ENCODE measurements at regions of chr19 and their contacts with region 1.

Region 1: DNA sequence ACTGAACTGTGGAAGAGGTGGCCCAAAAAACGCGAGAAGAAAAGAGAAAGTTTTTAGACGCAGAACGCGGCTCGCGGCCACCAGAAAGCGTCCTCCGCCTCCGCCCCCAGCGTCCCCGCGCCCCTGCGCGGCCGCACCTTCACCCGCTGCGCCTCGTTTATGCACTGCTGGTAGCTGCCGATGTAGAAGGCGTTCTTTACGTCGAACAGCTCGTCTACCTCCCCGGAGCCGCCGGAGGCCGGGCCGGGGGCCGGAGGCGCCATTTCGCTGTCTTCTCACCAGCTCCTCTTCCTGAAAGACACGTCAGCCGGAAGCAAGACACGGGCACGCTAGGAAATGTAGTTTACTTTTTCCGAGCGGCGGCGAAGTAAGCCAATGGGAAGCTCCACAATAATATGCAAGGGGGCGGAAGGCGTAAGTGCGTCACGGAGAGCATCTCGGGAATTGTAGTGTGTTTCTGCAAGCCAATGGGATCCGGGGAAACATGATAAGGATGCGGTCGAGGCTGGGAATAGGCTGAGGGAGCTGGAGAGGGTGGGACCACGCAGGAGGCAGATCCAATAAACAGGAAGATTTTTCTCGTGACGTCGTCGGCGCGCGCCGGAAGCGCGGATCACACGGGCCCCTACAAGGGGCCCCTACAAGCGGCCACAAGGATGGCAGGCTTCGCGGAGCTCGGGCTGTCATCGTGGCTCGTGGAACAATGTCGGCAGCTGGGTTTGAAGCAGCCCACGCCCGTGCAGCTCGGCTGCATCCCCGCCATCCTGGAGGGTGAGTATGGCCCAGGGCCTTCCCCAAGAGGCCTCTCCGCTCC is at the starts of genes COPE and DDX49:
- DNase-seq: peak; percentile 99
- H3K4me3 Mint-ChIP-seq: peak within 1 kb of the TSS; percentile 89
- H3K27ac Mint-ChIP-seq: peak within 1 kb of the TSS; percentile 84
- H3K4me1 Mint-ChIP-seq: peaks cover 35% of the 10 kb centered on the region
- H3K27me3 Mint-ChIP-seq: no peaks in the 10 kb centered on the region
- total RNA-seq, gene COPE: 217 to 220 TPM
- total RNA-seq, gene DDX49: 37.7 to 46.3 TPM

Region 2: DNA sequence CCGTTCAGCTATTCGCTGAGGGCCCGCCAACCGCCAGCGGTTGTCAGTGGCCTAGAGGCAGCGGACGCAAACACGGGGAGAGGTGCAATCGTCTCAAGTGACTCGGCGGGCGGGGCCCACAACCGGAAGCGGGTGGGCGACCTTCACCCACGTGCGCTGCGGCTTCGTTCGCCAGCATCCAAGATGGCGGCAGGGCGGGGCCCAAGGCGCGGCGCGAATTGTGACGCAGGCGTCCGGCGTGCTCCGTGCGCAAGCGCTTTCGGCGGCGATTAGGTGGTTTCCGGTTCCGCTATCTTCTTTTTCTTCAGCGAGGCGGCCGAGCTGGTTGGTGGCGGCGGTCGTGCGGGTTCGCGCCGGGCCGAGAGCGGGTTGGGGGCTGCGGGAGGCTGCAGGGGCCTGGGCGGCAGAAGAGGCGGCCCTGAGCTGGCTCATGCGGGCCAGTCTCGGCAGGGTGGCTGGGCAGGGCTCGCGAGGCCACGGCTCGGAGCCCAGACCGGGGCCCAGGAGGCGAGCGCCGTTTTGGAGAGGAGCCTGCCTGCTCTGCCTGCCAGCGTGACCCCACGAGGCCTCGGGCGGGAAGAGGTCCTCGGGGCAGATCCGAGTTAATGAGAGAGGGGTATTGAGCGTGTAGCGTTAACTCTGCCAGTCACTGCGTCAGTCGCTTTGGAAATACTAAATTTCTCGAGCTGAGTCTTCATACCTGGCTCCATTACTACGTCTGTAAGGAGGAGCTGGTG is 347.6 kb before region 1 on chr19 and contains the start of gene UBA52:
- CTCF ChIA-PET with region 1: interaction called, 5 read pairs
- POLR2A ChIA-PET with region 1: interaction called, 10 read pairs
- intact Hi-C with region 1: loop called (anchors 1 kb)
- DNase-seq: peak; percentile 99
- H3K4me3 Mint-ChIP-seq: peak within 1 kb of the TSS; percentile 91
- H3K27ac Mint-ChIP-seq: peak within 1 kb of the TSS; percentile 92
- H3K4me1 Mint-ChIP-seq: peaks cover 23% of the 10 kb centered on the region
- H3K27me3 Mint-ChIP-seq: no peaks in the 10 kb centered on the region
- total RNA-seq, gene UBA52: 1,569 to 1,601 TPM

Region 3: GRCh38 chr19:18776288-18776594 is 143.1 kb before region 1 on chr19:
- CTCF ChIA-PET with region 1: no interaction called
- POLR2A ChIA-PET with region 1: no interaction called
- intact Hi-C with region 1: no loop called
- DNase-seq: no peak
- H3K4me3 Mint-ChIP-seq: no peak overlapping the region
- H3K27ac Mint-ChIP-seq: no peak overlapping the region
- H3K4me1 Mint-ChIP-seq: no peaks in the 10 kb centered on the region
- H3K27me3 Mint-ChIP-seq: no peaks in the 10 kb centered on the region

Region 4: DNA sequence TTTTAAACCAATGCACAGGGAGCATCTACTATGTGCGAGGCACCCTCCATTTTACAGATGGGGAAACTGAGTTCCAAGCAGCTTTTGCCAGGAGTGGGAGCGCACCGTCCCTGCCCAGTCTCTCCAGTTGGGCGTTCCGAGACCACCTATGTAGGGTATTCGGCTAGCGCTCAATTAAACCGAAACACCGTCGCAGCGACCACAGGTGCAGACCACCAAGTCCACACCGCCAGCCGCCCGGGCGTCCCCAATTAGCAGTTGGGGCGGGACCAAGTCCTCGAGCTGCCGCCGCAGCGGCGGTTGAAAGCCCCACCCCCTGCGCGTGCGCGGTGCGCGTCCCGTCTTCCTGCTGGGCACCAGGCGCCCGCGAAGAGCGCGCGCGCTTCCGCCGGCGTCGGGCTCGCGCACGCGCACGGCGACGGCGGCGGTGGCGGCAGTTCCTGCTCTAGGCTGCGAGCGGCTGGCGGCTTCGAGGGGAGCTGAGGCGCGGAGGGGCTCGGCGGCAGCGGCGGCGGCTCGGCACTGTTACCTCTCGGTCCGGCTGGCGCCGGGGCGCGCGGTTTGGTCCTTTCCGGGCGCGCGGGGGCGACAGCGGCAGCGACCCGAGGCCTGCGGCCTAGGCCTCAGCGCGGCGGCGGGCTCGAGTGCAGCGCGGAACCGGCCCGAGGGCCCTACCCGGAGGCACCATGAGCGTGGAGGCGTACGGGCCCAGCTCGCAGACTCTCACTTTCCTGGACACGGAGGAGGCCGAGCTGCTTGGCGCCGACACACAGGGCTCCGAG is 87.6 kb before region 1 on chr19 and contains the start of gene UPF1:
- CTCF ChIA-PET with region 1: no interaction called
- POLR2A ChIA-PET with region 1: interaction called, 8 read pairs
- intact Hi-C with region 1: loop called (anchors 5 kb)
- DNase-seq: peak; percentile 96
- H3K4me3 Mint-ChIP-seq: peak within 1 kb of the TSS; percentile 96
- H3K27ac Mint-ChIP-seq: peak within 1 kb of the TSS; percentile 93
- H3K4me1 Mint-ChIP-seq: peaks cover 31% of the 10 kb centered on the region
- H3K27me3 Mint-ChIP-seq: no peaks in the 10 kb centered on the region
- total RNA-seq, gene UPF1: 71.7 to 77.2 TPM

Region 5: GRCh38 chr19:19033426-19034203 is 114.3 kb after region 1 on chr19 and contains the starts of genes ARMC6 and SUGP2:
- CTCF ChIA-PET with region 1: no interaction called
- POLR2A ChIA-PET with region 1: no interaction called
- intact Hi-C with region 1: loop called (anchors 1 kb)
- DNase-seq: peak; percentile 91
- H3K4me3 Mint-ChIP-seq: peak within 1 kb of the TSS; percentile 89
- H3K27ac Mint-ChIP-seq: peak within 1 kb of the TSS; percentile 84
- H3K4me1 Mint-ChIP-seq: peaks cover 30% of the 10 kb centered on the region
- H3K27me3 Mint-ChIP-seq: no peaks in the 10 kb centered on the region
- total RNA-seq, gene ARMC6: 24.4 to 26.2 TPM
- total RNA-seq, gene SUGP2: 98.1 to 102 TPM

Region 6: GRCh38 chr19:19138169-19138981 is 219.1 kb after region 1 on chr19 and contains the start of gene TMEM161A:
- CTCF ChIA-PET with region 1: no interaction called
- POLR2A ChIA-PET with region 1: no interaction called
- intact Hi-C with region 1: loop called (anchors 1 kb)
- DNase-seq: peak; percentile 99
- H3K4me3 Mint-ChIP-seq: peak within 1 kb of the TSS; percentile 86
- H3K27ac Mint-ChIP-seq: peak within 1 kb of the TSS; percentile 78
- H3K4me1 Mint-ChIP-seq: peaks cover 29% of the 10 kb centered on the region
- H3K27me3 Mint-ChIP-seq: no peaks in the 10 kb centered on the region
- total RNA-seq, gene TMEM161A: 17.8 to 18.9 TPM

Measured in activated CD4-positive, alpha-beta memory T cell treated with anti-CD3 and anti-CD28 coated beads for 36 hours (primary cell).